WTC11 (cell line): ENCODE measurements at regions of chr7 and their contacts with region 1.

Region 1: GRCh38 chr7:139505563-139505962 is 17.9 kb upstream of the CLEC2L start:
- DNase-seq: peak; percentile 82
- ATAC-seq: peak; percentile 93
- H3K4me3 Mint-ChIP-seq: no peak overlapping the region
- H3K27ac Mint-ChIP-seq: no peak overlapping the region
- H3K4me1 Mint-ChIP-seq: peaks cover 13% of the 10 kb centered on the region
- H3K27me3 Mint-ChIP-seq: peaks cover 2% of the 10 kb centered on the region; the same call in 1 of the 2 replicates
- CTCF ChIP-seq: peak; percentile 91

Region 2: GRCh38 chr7:139482662-139483469 is 22.7 kb before region 1 on chr7:
- CTCF ChIA-PET with region 1: interaction called, 41 read pairs
- POLR2A ChIA-PET with region 1: interaction called, 7 read pairs
- DNase-seq: peak; percentile 64
- ATAC-seq: peak; percentile 10
- H3K4me3 Mint-ChIP-seq: peak overlapping the region; percentile 73
- H3K27ac Mint-ChIP-seq: no peak overlapping the region
- H3K4me1 Mint-ChIP-seq: peaks cover 12% of the 10 kb centered on the region
- H3K27me3 Mint-ChIP-seq: peaks cover 28% of the 10 kb centered on the region
- CTCF ChIP-seq: no peak

Region 3: DNA sequence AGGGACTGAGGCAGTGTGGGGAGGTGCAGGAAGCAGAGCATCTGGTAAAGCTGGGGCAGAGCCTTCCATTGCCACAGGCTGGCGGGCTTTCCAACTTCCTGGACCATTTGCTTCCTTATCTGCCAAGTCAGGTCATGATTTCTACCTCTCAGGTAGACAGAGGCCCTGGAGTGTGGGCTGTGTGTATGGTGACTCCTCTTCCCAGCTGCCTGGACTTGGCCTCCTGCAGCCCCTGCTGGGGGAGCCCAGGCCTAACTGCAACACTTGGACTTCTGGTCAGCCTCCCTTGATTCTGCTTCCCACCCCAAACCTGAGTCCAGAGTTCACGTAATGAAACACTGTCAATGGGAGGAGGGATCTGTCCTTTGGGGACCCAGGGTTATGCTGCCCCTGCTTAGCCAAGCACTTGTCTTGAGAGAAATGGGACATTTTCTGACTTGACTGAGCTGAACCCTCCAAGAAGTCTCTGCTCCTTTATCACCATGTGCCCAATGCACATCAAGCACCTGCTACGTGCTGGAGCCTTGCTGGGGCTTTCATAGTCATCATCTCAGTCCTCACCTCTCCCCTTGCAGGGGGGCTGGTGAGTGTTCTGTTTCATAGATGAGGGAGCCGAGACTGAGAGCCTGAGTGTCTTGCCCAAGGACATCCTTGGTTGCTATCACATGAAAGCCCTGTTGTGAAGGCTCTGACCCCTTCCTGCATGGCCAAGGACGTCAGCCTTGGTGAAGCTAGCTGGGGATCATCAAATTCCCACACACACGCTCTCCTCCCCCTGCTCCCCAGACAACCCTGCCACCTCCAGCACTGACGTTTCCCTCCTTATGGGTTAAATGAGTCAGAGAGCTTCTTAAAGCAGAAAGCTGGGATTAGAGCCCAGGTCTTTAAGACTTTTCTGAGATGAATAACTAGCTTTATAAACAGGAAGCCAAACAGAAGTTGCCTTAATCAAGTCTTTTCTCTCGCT is 21.3 kb after region 1 on chr7:
- CTCF ChIA-PET with region 1: interaction called, 17 read pairs
- POLR2A ChIA-PET with region 1: no interaction called
- DNase-seq: no peak
- ATAC-seq: no peak
- H3K4me3 Mint-ChIP-seq: no peak overlapping the region
- H3K27ac Mint-ChIP-seq: no peak overlapping the region
- H3K4me1 Mint-ChIP-seq: peaks cover 3% of the 10 kb centered on the region
- H3K27me3 Mint-ChIP-seq: peaks cover 58% of the 10 kb centered on the region
- CTCF ChIP-seq: no peak

Region 4: GRCh38 chr7:139570119-139570518 is 64.6 kb after region 1 on chr7:
- CTCF ChIA-PET with region 1: interaction called, 10 read pairs
- POLR2A ChIA-PET with region 1: no interaction called
- DNase-seq: no peak
- ATAC-seq: no peak
- H3K4me3 Mint-ChIP-seq: no peak overlapping the region
- H3K27ac Mint-ChIP-seq: no peak overlapping the region
- H3K4me1 Mint-ChIP-seq: peaks cover 24% of the 10 kb centered on the region
- H3K27me3 Mint-ChIP-seq: no peaks in the 10 kb centered on the region
- CTCF ChIP-seq: no peak

Region 5: GRCh38 chr7:139613971-139614411 is 108.4 kb after region 1 on chr7:
- CTCF ChIA-PET with region 1: interaction called, 15 read pairs
- POLR2A ChIA-PET with region 1: no interaction called
- DNase-seq: peak; percentile 45
- ATAC-seq: peak; percentile 91
- H3K4me3 Mint-ChIP-seq: no peak overlapping the region
- H3K27ac Mint-ChIP-seq: peak overlapping the region; percentile 97
- H3K4me1 Mint-ChIP-seq: peaks cover 20% of the 10 kb centered on the region
- H3K27me3 Mint-ChIP-seq: no peaks in the 10 kb centered on the region
- CTCF ChIP-seq: no peak

Region 6: GRCh38 chr7:140003913-140004382 is 498.4 kb after region 1 on chr7:
- CTCF ChIA-PET with region 1: interaction called, 13 read pairs
- POLR2A ChIA-PET with region 1: no interaction called
- DNase-seq: peak; percentile 49
- ATAC-seq: peak; percentile 46
- H3K4me3 Mint-ChIP-seq: no peak overlapping the region
- H3K27ac Mint-ChIP-seq: peak overlapping the region; percentile 91
- H3K4me1 Mint-ChIP-seq: peaks cover 16% of the 10 kb centered on the region
- H3K27me3 Mint-ChIP-seq: no peaks in the 10 kb centered on the region
- CTCF ChIP-seq: peak; percentile 46; the same call in 1 of the 2 replicates